ENCODE measurements at regions of chr1 and their contacts with region 1.

Region 1: DNA sequence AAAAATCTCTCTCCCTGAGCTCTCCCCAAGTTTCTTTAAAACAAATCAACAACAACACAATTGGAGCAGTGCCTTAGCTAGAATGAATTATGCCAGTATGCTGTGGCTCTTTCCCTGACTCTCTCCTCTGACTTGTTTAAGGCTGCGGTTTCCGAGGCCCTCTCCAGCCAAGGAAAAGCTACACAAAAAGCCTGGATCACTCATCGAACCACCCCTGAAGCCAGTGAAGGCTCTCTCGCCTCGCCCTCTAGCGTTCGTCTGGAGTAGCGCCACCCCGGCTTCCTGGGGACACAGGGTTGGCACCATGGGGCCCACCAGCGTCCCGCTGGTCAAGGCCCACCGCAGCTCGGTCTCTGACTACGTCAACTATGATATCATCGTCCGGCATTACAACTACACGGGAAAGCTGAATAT is 1.9 kb downstream of the S1PR1 start:
- DNase-seq: peak; percentile 97
- H3K4me3 Mint-ChIP-seq: peak overlapping the region; percentile 99
- H3K27ac Mint-ChIP-seq: peak overlapping the region; percentile 99
- H3K4me1 Mint-ChIP-seq: peaks cover 44% of the 10 kb centered on the region
- H3K27me3 Mint-ChIP-seq: no peaks in the 10 kb centered on the region

Region 2: GRCh38 chr1:100351095-100351891 is 887.4 kb before region 1 on chr1:
- CTCF ChIA-PET with region 1: no interaction called
- intact Hi-C with region 1: loop called (anchors 1 kb)
- DNase-seq: peak; percentile 92
- H3K4me3 Mint-ChIP-seq: peak overlapping the region; percentile 94
- H3K27ac Mint-ChIP-seq: peak overlapping the region; percentile 97
- H3K4me1 Mint-ChIP-seq: peaks cover 29% of the 10 kb centered on the region
- H3K27me3 Mint-ChIP-seq: no peaks in the 10 kb centered on the region

Region 3: GRCh38 chr1:100921109-100921706 is 317.5 kb before region 1 on chr1:
- CTCF ChIA-PET with region 1: interaction called, 5 read pairs
- intact Hi-C with region 1: loop called (anchors 1 kb)
- DNase-seq: no peak
- H3K4me3 Mint-ChIP-seq: no peak overlapping the region
- H3K27ac Mint-ChIP-seq: peak overlapping the region; percentile 39
- H3K4me1 Mint-ChIP-seq: peaks cover 16% of the 10 kb centered on the region
- H3K27me3 Mint-ChIP-seq: no peaks in the 10 kb centered on the region

Region 4: GRCh38 chr1:100955322-100955721 is 283.4 kb before region 1 on chr1:
- CTCF ChIA-PET with region 1: no interaction called
- intact Hi-C with region 1: loop called (anchors 1 kb)
- DNase-seq: no peak
- H3K4me3 Mint-ChIP-seq: no peak overlapping the region
- H3K27ac Mint-ChIP-seq: peak overlapping the region; percentile 65
- H3K4me1 Mint-ChIP-seq: peaks cover 62% of the 10 kb centered on the region
- H3K27me3 Mint-ChIP-seq: no peaks in the 10 kb centered on the region

Region 5: DNA sequence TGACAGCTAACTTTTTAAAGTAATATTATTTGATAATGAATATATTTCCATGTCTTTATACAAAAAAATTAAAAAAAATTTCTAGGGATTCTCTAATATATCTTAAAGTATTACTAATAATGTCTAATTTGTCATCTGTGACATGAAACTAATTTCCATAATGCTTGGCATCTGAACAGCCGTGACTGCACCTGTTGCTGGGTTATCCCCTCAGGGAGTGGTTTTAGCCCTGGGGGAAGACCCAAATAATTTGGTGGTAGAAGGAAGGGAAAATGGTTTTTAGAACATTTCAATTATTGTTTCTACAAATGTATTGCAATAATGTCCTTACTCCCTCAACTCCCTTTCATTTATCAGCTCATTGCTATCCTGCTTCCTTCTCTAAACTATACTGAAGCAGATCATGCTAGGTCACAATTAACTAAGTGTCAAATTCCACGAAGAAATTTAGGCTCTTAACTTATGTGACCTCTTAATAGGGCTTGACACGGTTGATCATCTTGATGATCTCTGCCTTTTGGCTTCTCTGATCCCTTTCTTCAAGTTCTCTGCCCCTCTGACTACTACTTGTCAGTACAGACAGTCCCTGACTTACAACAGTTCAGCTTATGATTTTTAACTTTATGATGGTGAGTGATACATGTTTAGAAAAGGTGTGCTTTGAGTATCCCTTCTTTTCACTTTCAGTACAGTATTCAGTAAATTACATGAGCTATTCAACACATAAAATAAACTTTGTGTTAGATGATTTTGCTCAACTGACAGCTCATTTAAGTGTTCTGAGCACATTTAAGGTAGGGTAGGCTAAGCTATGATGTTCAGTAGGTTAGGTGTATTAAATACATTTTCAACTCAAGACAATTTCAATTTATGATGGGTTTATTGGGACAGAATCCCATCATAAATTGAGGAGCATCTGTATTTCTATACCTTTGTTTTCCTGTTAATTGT is 186.7 kb before region 1 on chr1:
- CTCF ChIA-PET with region 1: no interaction called
- intact Hi-C with region 1: loop called (anchors 2 kb)
- DNase-seq: peak; percentile 64
- H3K4me3 Mint-ChIP-seq: no peak overlapping the region
- H3K27ac Mint-ChIP-seq: peak overlapping the region; percentile 48
- H3K4me1 Mint-ChIP-seq: peaks cover 17% of the 10 kb centered on the region
- H3K27me3 Mint-ChIP-seq: no peaks in the 10 kb centered on the region

Region 6: DNA sequence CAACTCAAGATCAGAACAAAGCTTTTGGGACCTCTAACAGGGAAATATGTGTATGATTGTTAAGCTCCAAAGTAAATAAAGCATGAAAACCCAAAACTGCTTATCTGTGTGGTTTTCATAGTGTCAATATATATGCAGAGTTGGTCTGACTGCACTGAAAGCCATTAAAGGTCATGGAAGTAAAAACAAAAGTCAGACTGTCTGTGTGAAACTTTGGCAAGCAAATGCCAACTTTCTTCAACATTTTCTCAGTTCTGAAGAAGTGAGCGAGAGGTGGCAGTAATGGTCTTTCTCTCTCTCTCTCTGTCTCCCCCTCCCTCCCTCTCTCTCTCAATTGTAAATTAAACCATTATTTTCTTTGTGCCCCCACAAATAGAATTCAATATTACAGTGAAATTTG is 101.9 kb before region 1 on chr1:
- CTCF ChIA-PET with region 1: interaction called, 71 read pairs
- intact Hi-C with region 1: loop called (anchors 1 kb)
- DNase-seq: peak; percentile 61
- H3K4me3 Mint-ChIP-seq: no peak overlapping the region
- H3K27ac Mint-ChIP-seq: peak overlapping the region; percentile 62
- H3K4me1 Mint-ChIP-seq: peaks cover 67% of the 10 kb centered on the region
- H3K27me3 Mint-ChIP-seq: no peaks in the 10 kb centered on the region

Region 7: DNA sequence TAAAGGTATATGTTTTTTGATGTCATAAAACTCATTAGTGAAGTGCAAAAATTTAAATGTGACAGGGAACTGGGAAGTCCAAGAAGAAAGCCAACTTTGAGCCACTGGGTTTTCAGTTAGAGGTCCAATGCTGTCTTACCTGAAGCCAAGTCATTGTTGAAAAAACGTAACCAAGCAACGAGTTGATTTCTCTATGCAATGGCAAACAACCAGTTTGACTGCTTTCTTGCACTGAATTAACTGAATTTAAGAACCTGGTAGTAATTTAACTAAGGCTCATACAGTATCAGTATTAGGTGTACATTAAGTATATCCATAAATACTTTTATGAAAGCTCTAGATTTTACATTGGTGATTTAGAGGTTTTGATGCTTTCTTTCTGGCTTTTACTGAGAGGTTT is 22.1 kb before region 1 on chr1:
- CTCF ChIA-PET with region 1: interaction called, 6 read pairs
- intact Hi-C with region 1: loop called (anchors 1 kb)
- DNase-seq: no peak
- H3K4me3 Mint-ChIP-seq: no peak overlapping the region
- H3K27ac Mint-ChIP-seq: no peak overlapping the region
- H3K4me1 Mint-ChIP-seq: peaks cover 25% of the 10 kb centered on the region
- H3K27me3 Mint-ChIP-seq: no peaks in the 10 kb centered on the region